WTC11 (cell line): ENCODE measurements at regions of chr6 and their contacts with region 1.

Region 1: DNA sequence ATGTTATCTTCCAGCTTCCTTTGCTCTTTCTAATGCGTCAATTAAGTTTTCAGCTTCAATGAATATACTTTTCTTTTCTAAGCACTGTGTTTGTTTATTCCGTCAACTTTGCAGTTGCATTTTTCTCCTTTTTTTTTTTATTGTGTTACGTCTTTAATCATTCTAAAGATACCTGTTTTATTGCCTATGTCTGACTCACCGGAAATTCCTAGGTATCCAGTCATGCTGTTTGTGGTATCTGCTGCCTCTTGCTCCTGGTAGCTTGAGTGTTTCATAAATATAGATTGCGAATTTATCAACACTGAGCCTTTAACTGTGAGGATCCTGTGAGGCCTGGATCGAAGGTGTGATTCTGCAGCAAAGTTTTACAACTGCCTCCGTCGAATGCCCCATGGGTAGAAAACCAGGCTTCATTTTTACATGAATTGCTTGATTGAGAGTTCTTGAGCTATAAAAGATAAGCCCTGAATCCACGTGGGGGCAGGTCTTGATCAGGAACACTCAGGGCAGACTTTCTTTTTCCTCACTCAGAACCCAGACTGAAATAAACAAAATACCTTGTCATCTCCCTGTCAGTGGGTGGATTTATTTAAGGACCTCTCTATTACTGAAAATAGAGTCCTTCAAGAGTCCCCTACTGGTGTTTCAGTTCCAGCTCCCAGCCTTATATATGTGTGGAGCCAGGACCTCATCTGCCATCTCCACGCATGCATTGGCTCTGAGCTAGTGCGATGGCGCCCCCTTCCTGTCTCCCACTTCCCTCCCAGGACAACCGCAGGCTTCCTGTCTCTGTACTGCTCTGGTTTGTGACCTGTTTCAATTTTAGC is 60.1 kb upstream of the LRRC1 start:
- DNase-seq: peak; percentile 72
- ATAC-seq: peak; percentile 99
- H3K4me3 Mint-ChIP-seq: no peak overlapping the region
- H3K27ac Mint-ChIP-seq: no peak overlapping the region
- H3K4me1 Mint-ChIP-seq: peaks cover 35% of the 10 kb centered on the region
- H3K27me3 Mint-ChIP-seq: no peaks in the 10 kb centered on the region
- CTCF ChIP-seq: peak; percentile 33; the same call in 1 of the 2 replicates

Region 2: DNA sequence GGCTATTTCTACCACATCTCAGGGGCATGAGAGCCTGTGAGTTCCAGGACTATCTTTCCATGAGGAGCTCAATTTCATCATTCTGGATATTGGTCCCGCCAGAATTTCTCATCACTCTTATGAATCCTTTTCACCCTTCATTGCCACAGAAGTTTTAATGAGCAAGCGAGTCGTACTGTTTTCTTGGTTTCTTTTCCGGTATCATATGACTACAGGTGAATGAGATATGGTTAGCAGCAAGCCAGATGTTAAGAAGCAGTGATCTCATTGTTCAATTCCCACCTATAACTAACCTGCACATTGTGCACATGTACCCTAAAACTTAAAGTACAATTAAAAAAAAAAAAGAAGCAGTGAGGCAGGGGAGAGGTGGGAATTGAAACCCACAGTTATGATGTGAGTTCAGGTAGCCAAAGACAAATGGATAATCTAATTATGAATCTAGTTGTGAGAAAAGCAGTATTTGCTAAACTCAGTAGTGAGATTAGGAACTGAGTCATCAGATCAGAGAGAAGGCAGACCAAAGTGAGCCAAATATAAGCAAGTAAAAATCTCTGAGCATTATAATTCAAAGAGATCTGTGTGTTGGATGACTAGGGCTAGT is 307.9 kb before region 1 on chr6:
- CTCF ChIA-PET with region 1: no interaction called
- POLR2A ChIA-PET with region 1: no interaction called
- DNase-seq: no peak
- ATAC-seq: no peak
- H3K4me3 Mint-ChIP-seq: no peak overlapping the region
- H3K27ac Mint-ChIP-seq: no peak overlapping the region
- H3K4me1 Mint-ChIP-seq: peaks cover 14% of the 10 kb centered on the region
- H3K27me3 Mint-ChIP-seq: no peaks in the 10 kb centered on the region
- CTCF ChIP-seq: no peak

Region 3: GRCh38 chr6:53746442-53747103 is 11.9 kb after region 1 on chr6:
- CTCF ChIA-PET with region 1: interaction called, 10 read pairs
- POLR2A ChIA-PET with region 1: no interaction called
- DNase-seq: no peak
- ATAC-seq: peak; percentile 65
- H3K4me3 Mint-ChIP-seq: no peak overlapping the region
- H3K27ac Mint-ChIP-seq: peak overlapping the region; percentile 83
- H3K4me1 Mint-ChIP-seq: peaks cover 17% of the 10 kb centered on the region
- H3K27me3 Mint-ChIP-seq: no peaks in the 10 kb centered on the region
- CTCF ChIP-seq: no peak

Region 4: DNA sequence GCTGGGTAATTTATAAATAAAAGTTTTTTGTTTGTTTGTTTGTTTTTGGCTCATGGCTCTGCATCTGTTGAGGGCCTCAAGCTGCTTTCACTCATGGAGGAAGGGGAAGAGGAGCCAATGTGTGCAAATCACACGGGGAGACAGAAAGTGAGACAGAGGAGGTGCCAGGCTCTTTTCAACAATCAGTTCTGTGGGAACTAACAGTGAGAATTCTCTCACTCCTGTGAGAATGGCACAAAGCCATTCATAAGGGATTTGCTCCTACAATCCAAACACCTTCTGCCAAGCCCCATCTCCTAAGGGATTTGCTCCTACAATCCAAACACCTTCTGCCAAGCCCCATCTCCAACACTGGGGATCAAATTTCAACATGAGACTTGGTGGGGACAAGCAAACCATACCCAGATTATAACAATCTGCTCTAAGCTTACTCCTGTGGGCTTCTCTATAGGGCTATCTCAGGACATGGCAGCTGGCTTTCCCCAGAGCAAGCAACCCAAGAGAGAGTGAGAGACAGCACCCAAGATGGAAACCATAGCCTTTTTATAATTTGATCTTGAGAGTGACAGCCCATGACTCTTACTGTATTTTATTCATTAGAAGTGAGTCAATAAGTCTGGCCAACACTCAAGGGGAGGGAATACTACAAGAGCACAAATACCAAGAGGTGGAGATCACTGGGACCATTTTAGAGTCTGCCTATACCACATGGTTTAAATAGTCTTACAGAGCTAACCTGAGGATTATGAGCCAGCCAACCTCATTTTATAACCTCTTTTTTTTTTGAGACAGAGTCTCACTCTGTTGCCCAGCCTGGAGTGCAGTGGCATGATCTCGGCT is 37.3 kb after region 1 on chr6:
- CTCF ChIA-PET with region 1: interaction called, 10 read pairs
- POLR2A ChIA-PET with region 1: no interaction called
- DNase-seq: no peak
- ATAC-seq: no peak
- H3K4me3 Mint-ChIP-seq: no peak overlapping the region
- H3K27ac Mint-ChIP-seq: no peak overlapping the region
- H3K4me1 Mint-ChIP-seq: peaks cover 16% of the 10 kb centered on the region
- H3K27me3 Mint-ChIP-seq: peaks cover 5% of the 10 kb centered on the region; the same call in 1 of the 2 replicates
- CTCF ChIP-seq: no peak

Region 5: DNA sequence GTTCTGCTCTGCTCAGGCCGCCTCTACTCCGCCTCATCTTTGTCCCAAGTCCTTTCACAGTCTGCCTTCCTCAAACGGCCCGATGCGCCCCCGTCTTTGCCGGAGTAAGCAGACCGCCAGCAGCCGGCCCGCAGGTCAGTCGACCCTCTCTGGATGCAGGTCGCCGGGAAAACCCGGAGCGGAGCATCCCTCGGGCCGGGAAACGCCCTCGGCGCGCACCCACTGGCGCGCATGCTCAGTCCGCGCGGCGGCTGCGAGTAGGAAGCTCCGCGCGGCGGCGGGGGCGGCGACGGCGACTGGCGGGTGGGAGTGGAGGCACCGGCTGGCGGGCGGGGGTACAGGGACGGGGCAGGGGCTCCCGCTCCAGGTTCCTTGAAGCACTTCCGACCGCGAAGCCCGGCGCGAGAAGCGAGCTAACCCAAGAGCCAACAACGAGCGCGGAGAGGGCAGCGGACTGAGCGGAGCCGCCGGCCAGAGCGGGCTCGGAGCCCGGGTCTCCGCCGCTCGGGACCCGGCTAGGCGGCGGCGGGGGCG is 60.1 kb after region 1 on chr6 and contains the start of gene LRRC1:
- CTCF ChIA-PET with region 1: interaction called, 11 read pairs
- POLR2A ChIA-PET with region 1: interaction called, 3 read pairs
- DNase-seq: peak; percentile 96
- ATAC-seq: peak; percentile 66
- H3K4me3 Mint-ChIP-seq: peak within 1 kb of the TSS; percentile 95
- H3K27ac Mint-ChIP-seq: peak within 1 kb of the TSS; percentile 98
- H3K4me1 Mint-ChIP-seq: peaks cover 30% of the 10 kb centered on the region
- H3K27me3 Mint-ChIP-seq: peaks cover 20% of the 10 kb centered on the region
- CTCF ChIP-seq: no peak
- total RNA-seq, gene LRRC1: 12.6 to 13.2 TPM (median 12.7 TPM) in 3 replicates